Endothelial cell of umbilical vein (primary cell): ENCODE measurements at regions of chr17 and their contacts with region 1.

Region 1: GRCh38 chr17:55086635-55087058 is 118.1 kb downstream of the STXBP4 start:
- DNase-seq: peak; percentile 91
- H3K4me3 ChIP-seq: no peak overlapping the region
- H3K27ac ChIP-seq: no peak overlapping the region
- H3K4me1 ChIP-seq: peaks cover 10% of the 10 kb centered on the region
- H3K27me3 ChIP-seq: no peaks in the 10 kb centered on the region
- CTCF ChIP-seq: no peak
- POLR2A ChIP-seq: no peak

Region 2: GRCh38 chr17:55117164-55117563 is 30.5 kb after region 1 on chr17:
- CTCF ChIA-PET with region 1: interaction called, 3 read pairs
- POLR2A ChIA-PET with region 1: no interaction called
- dilution Hi-C with region 1: no loop called
- intact Hi-C with region 1: loop called (anchors 1 kb)
- DNase-seq: peak; percentile 51
- H3K4me3 ChIP-seq: no peak overlapping the region
- H3K27ac ChIP-seq: peak overlapping the region; percentile 38
- H3K4me1 ChIP-seq: peaks cover 17% of the 10 kb centered on the region
- H3K27me3 ChIP-seq: no peaks in the 10 kb centered on the region
- CTCF ChIP-seq: no peak
- POLR2A ChIP-seq: no peak

Region 3: GRCh38 chr17:55161935-55162555 is 75.4 kb after region 1 on chr17:
- CTCF ChIA-PET with region 1: no interaction called
- POLR2A ChIA-PET with region 1: no interaction called
- dilution Hi-C with region 1: no loop called
- intact Hi-C with region 1: loop called (anchors 1 kb)
- DNase-seq: peak; percentile 53
- H3K4me3 ChIP-seq: no peak overlapping the region
- H3K27ac ChIP-seq: peak overlapping the region; percentile 43
- H3K4me1 ChIP-seq: peaks cover 29% of the 10 kb centered on the region
- H3K27me3 ChIP-seq: no peaks in the 10 kb centered on the region
- CTCF ChIP-seq: no peak
- POLR2A ChIP-seq: no peak

Region 4: GRCh38 chr17:55273579-55274354 is 187.1 kb after region 1 on chr17:
- CTCF ChIA-PET with region 1: no interaction called
- POLR2A ChIA-PET with region 1: no interaction called
- dilution Hi-C with region 1: no loop called
- intact Hi-C with region 1: no loop called
- DNase-seq: no peak
- H3K4me3 ChIP-seq: no peak overlapping the region
- H3K27ac ChIP-seq: no peak overlapping the region
- H3K4me1 ChIP-seq: no peaks in the 10 kb centered on the region
- H3K27me3 ChIP-seq: peaks cover 8 to 11% of the 10 kb centered on the region in 2 experiments
- CTCF ChIP-seq: no peak
- POLR2A ChIP-seq: no peak